Activated CD8-positive, alpha-beta memory T cell treated with anti-CD3 and anti-CD28 coated beads, Interleukin-2, amount 10 ng/mL, durations not matched to agents 7 days and 5 days (primary cell): ENCODE measurements at regions of chr22 and their contacts with region 1.

Region 1: GRCh38 chr22:37633625-37634416 is 5.6 kb upstream of the SH3BP1 start:
- DNase-seq: peak; percentile 89
- ATAC-seq: peak; percentile 60
- H3K4me3 Mint-ChIP-seq: peak overlapping the region; percentile 72
- H3K27ac Mint-ChIP-seq: peak overlapping the region; percentile 91
- H3K4me1 Mint-ChIP-seq: peaks cover 74% of the 10 kb centered on the region
- H3K27me3 Mint-ChIP-seq: no peaks in the 10 kb centered on the region

Region 2: GRCh38 chr22:37548921-37549320 is 84.9 kb before region 1 on chr22:
- CTCF ChIA-PET with region 1: no interaction called
- DNase-seq: no peak
- ATAC-seq: no peak
- H3K4me3 Mint-ChIP-seq: no peak overlapping the region
- H3K27ac Mint-ChIP-seq: no peak overlapping the region
- H3K4me1 Mint-ChIP-seq: peaks cover 10% of the 10 kb centered on the region
- H3K27me3 Mint-ChIP-seq: peaks cover 26% of the 10 kb centered on the region

Region 3: GRCh38 chr22:37623075-37624016 is 10.5 kb before region 1 on chr22:
- CTCF ChIA-PET with region 1: interaction called, 298 read pairs
- DNase-seq: peak; percentile 86
- ATAC-seq: peak; percentile 73
- H3K4me3 Mint-ChIP-seq: no peak overlapping the region
- H3K27ac Mint-ChIP-seq: peak overlapping the region; percentile 84
- H3K4me1 Mint-ChIP-seq: peaks cover 39% of the 10 kb centered on the region
- H3K27me3 Mint-ChIP-seq: no peaks in the 10 kb centered on the region